Transverse colon (tissue), 4 donors: ENCODE measurements at regions of chr6 and their contacts with region 1.

Region 1: DNA sequence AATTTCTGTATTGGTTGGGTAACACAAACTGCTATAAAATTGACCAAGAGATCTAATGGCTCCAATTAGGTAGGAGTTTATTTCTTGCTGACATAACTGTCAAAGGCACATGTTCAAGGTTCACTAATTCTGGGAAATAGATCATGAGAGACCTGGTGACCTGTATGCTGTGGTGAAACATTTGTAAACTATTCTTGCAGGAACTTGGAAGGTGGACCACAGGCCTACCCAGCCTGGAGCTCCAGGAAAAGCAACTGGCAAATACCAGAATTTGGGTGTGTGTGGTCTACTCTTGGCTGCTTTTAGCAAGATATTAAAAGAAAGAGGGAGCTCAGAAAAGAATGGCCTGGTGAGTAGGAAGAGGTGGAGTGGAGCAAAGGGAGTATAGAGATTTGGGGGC is 184.6 kb downstream of the QKI start:
- DNase-seq: no peak
- H3K4me3 ChIP-seq: no peak overlapping the region
- H3K27ac ChIP-seq: no peak overlapping the region
- H3K4me1 ChIP-seq: no peaks in the 10 kb centered on the region
- H3K27me3 ChIP-seq: no peaks in the 10 kb centered on the region
- CTCF ChIP-seq: no peak
- EP300 ChIP-seq: no peak
- POLR2A ChIP-seq: no peak

Region 2: GRCh38 chr6:164085091-164086075 is 486.2 kb after region 1 on chr6:
- in situ Hi-C with region 1: no loop called
- intact Hi-C with region 1: no loop called
- DNase-seq: no peak
- H3K4me3 ChIP-seq: no peak overlapping the region
- H3K27ac ChIP-seq: peak overlapping the region; percentile 34 to 48 (median 40)
- H3K4me1 ChIP-seq: no peaks in the 10 kb centered on the region
- H3K27me3 ChIP-seq: no peaks in the 10 kb centered on the region
- CTCF ChIP-seq: no peak
- EP300 ChIP-seq: no peak
- POLR2A ChIP-seq: no peak

Region 3: DNA sequence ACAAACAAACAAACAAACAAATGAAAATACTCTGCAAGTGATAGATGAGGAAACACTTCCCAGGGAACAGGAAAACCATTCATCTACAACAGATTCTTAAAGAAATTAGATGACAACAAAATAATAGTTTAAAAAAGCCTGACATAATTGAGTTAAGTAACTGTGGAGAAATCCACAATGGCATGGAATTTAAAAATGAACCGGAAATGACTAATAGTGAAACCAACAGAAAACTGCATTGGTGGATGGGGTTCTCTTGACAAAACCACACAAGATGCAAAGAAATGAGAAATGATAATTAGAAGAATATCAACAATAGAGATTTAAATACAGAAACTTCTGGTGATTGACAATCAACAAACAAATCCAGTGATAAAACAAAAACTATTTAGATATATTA is 600.9 kb after region 1 on chr6:
- in situ Hi-C with region 1: no loop called
- intact Hi-C with region 1: no loop called
- DNase-seq: no peak
- H3K4me3 ChIP-seq: no peak overlapping the region
- H3K27ac ChIP-seq: no peak overlapping the region
- H3K4me1 ChIP-seq: no peaks in the 10 kb centered on the region
- H3K27me3 ChIP-seq: no peaks in the 10 kb centered on the region
- CTCF ChIP-seq: no peak
- EP300 ChIP-seq: no peak
- POLR2A ChIP-seq: no peak

Region 4: GRCh38 chr6:164308339-164308738 is 709.2 kb after region 1 on chr6:
- in situ Hi-C with region 1: no loop called
- intact Hi-C with region 1: loop called (anchors 5 kb)
- DNase-seq: no peak
- H3K4me3 ChIP-seq: no peak overlapping the region
- H3K27ac ChIP-seq: no peak overlapping the region
- H3K4me1 ChIP-seq: no peaks in the 10 kb centered on the region
- H3K27me3 ChIP-seq: no peaks in the 10 kb centered on the region
- CTCF ChIP-seq: no peak
- EP300 ChIP-seq: no peak
- POLR2A ChIP-seq: no peak